HEK293 (cell line): ENCODE measurements at regions of chr3 and their contacts with region 1.

Region 1: DNA sequence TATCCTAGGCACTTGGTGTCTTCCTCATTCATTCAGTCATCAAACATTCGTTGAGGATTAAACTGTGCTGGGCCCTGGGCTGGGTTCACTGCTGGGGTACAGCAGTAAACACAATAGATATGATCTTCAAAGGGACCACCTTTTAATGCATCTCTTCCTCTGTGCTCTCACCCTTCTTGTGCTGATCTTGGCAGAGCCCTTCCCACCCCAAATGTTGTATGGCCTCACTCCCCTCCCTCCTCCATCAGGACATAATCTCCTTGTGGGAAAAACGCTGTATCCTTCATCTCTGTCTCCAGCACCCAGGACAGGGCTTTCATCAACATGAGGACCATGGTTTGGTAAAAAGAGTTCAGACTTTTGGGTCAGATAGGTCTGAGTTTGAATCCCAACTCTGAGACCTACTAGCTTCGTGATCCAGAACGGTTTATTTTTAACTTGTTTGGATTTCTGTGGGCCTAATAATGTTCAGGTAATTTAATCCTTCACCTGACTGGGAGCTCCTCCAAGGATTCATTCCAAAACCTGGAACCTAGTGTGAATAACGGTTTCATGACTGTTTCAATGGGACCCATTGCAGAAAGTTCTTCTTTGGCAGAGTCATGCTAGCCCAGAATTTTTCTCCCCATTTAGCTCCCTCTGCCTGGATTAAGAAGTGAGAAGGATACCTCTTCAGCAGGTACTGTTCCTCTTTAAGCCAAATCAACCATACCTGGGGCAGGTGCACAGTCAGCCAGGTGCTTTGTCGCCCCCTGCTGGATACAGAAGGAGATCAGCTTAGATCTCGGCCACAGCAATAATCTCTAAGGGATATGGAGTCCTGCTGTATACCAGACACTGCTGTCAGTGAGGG is 5.2 kb upstream of the WNT7A start:
- H3K4me3 ChIP-seq: no peak overlapping the region
- H3K27ac ChIP-seq: no peak overlapping the region
- H3K4me1 ChIP-seq: peaks cover 3% of the 10 kb centered on the region; the same call in 1 of the 2 replicates
- CTCF ChIP-seq: peak; percentile 24; the same call in 1 of the 2 replicates

Region 2: GRCh38 chr3:13600941-13601576 is 284.0 kb before region 1 on chr3:
- CTCF ChIA-PET with region 1: no interaction called
- POLR2A ChIA-PET with region 1: no interaction called
- H3K4me3 ChIP-seq: no peak overlapping the region
- H3K27ac ChIP-seq: no peak overlapping the region
- H3K4me1 ChIP-seq: no peaks in the 10 kb centered on the region
- CTCF ChIP-seq: no peak

Region 3: DNA sequence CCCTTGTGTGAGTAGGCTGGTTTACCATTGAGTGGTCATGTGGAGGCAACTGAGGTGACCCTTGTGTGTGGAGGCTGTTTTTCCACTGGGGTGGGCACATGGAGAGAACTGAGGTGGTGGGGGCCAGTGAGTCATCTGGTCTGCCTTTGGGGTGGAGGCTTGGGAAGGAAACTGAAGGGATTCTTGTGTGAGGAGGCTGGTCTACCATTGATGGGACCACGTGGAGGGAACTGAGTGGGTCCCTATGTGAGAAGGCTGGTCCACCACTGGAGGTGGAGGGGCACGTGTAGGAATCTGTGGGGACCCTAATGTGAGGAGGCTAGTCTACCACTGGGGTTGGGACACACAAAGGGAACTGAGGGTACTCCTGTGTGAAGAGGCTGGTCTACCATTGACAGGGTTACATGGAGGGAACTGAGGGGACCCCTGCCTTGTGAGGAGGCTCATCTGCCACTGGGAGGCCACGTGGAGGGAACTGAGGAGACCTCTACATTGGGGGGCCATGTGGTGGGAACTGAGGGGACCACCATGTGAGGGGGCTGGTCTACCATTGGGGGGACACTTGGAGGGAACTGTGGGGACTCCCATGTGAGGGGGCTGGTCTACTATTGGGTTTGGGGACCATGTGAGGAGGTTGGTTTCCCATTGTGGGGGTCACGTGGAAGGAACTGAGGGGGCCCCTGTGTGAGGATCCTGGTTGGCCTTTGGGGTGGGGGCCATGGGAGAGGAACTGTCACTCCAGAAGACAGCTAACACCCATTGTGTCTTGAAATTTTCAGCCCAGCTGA is 169.7 kb before region 1 on chr3:
- CTCF ChIA-PET with region 1: no interaction called
- POLR2A ChIA-PET with region 1: no interaction called
- H3K4me3 ChIP-seq: no peak overlapping the region
- H3K27ac ChIP-seq: no peak overlapping the region
- H3K4me1 ChIP-seq: no peaks in the 10 kb centered on the region
- CTCF ChIP-seq: no peak

Region 4: GRCh38 chr3:13850158-13850945 is 34.7 kb before region 1 on chr3:
- CTCF ChIA-PET with region 1: interaction called, 12 read pairs
- POLR2A ChIA-PET with region 1: no interaction called
- H3K4me3 ChIP-seq: no peak overlapping the region
- H3K27ac ChIP-seq: no peak overlapping the region
- H3K4me1 ChIP-seq: no peaks in the 10 kb centered on the region
- CTCF ChIP-seq: no peak

Region 5: DNA sequence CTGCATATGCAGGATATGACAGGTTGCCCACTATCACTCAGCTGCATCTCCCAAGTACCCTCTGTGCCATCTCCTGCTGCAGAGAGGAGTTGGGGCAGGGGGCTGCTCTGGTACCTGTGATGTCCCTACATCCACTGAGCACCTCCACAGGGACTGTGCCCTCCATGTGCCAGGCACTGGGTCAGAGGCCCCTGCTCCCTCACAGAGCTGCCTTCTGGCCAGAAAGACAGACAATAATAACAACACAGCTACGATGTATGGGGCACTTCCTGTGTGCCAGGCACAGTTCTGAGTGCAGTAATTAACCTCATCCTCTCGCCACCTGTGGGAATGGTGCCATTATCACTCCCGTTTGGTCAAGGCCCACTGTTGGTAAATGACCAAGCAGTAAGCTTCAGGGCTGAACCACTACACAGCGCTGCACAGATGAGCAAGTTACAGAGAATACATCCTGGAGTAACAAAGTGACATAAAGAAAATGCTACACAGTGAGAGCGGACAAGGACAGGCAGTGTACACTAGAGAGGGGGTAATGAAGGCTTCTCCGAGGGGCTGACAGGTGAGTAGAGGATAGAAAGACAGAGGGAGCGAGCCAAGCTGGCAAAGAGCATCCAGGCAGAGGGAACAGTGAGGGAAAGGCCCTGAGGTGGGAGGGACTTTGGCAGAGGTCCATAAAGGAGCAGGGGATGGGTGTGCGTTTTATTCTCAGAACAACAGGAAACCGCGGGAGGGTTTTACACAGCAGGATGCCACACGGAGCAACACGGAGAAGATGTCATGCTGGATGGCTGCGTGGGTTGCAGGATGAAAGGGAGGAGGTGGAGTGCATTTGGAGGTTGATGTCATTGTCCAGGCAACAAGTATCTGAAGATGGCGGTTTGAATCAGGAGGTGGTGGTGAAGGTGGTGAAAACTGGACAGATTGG is 18.8 kb before region 1 on chr3:
- CTCF ChIA-PET with region 1: interaction called, 11 read pairs
- POLR2A ChIA-PET with region 1: no interaction called
- H3K4me3 ChIP-seq: no peak overlapping the region
- H3K27ac ChIP-seq: no peak overlapping the region
- H3K4me1 ChIP-seq: no peaks in the 10 kb centered on the region
- CTCF ChIP-seq: no peak

Region 6: GRCh38 chr3:13895155-13896105 is 10.4 kb after region 1 on chr3:
- CTCF ChIA-PET with region 1: interaction called, 11 read pairs
- POLR2A ChIA-PET with region 1: no interaction called
- H3K4me3 ChIP-seq: peak overlapping the region; percentile 37
- H3K27ac ChIP-seq: no peak overlapping the region
- H3K4me1 ChIP-seq: no peaks in the 10 kb centered on the region
- CTCF ChIP-seq: no peak